Activated naive CD4-positive, alpha-beta T cell treated with anti-CD3 and anti-CD28 coated beads, Interleukin-2, amount 10 ng/mL, durations not matched to agents 7 days and 5 days (primary cell): ENCODE measurements at regions of chr20 and their contacts with region 1.

Region 1: DNA sequence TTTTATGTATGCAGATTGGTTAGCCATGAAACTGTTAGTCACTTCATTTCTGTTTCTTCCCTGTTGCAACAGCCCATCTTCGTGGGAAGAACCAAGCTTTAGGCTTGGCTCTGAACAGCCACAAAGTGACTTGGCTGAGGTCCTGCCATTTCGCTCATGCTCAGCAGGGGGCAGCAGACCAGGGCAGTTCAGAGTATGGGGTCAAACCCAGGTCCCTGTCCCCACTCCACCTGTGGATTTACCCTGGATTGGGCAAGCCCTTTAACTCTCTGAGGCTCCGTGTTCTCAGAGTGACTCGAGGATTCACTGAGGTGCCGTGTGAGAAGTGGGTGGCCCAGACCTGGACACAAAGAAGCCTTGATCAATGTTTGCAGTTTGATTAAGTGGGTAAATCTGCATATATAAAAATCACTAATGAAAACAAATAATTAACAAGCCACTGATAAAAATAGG is 19.8 kb upstream of the MAP1LC3A start:
- DNase-seq: peak; percentile 72
- H3K4me3 Mint-ChIP-seq: no peak overlapping the region
- H3K27ac Mint-ChIP-seq: peak overlapping the region; percentile 7
- H3K4me1 Mint-ChIP-seq: peaks cover 11% of the 10 kb centered on the region
- H3K27me3 Mint-ChIP-seq: no peaks in the 10 kb centered on the region

Region 2: GRCh38 chr20:34506480-34506879 is 32.2 kb before region 1 on chr20:
- CTCF ChIA-PET with region 1: no interaction called
- DNase-seq: no peak
- H3K4me3 Mint-ChIP-seq: no peak overlapping the region
- H3K27ac Mint-ChIP-seq: no peak overlapping the region
- H3K4me1 Mint-ChIP-seq: no peaks in the 10 kb centered on the region
- H3K27me3 Mint-ChIP-seq: no peaks in the 10 kb centered on the region

Region 3: DNA sequence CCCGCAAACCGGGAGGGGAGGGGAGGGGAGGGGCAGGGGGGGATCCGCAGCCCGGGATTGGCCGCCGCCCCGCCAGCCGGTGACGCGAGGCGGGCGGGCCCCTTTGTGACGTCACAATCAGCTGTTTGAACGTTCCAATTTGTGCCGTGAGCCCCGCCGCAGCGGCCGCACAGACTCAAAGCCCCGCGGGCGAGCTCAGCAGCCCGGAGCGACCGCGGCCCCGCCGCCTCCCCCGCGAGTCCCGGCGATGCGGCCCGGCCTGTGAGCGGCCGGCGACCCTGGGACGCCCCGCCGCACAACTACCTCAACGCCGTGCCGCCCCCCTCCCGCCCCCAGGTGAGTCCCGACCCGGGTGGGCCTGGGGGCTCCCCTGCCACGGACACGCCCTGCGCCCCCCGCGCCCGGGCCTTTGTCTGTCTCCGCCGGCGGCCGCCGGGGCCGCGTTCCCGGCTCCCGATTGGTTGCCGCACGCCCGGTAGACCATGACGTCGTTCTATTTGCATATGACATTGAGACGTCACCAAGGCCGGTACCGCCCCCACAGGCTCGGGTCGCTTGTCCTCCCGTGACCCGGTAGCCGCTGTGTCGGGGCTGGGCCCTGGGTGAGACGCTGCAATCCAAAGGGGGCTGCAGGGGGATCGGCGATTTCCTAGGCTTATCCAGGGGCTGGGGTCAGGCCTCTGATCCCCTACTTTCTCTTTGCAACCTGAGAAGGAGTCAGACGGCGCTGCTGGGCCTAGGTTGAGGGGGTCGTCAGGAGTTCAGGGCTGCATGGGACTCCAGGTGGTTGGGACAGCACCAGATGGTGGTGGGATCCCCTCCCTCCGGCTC is 165.7 kb after region 1 on chr20 and contains the start of gene TP53INP2:
- CTCF ChIA-PET with region 1: interaction called, 63 read pairs
- DNase-seq: peak; percentile 95
- H3K4me3 Mint-ChIP-seq: peak within 1 kb of the TSS; percentile 97
- H3K27ac Mint-ChIP-seq: peak within 1 kb of the TSS; percentile 90
- H3K4me1 Mint-ChIP-seq: peaks cover 46% of the 10 kb centered on the region
- H3K27me3 Mint-ChIP-seq: peaks cover 47% of the 10 kb centered on the region

Region 4: DNA sequence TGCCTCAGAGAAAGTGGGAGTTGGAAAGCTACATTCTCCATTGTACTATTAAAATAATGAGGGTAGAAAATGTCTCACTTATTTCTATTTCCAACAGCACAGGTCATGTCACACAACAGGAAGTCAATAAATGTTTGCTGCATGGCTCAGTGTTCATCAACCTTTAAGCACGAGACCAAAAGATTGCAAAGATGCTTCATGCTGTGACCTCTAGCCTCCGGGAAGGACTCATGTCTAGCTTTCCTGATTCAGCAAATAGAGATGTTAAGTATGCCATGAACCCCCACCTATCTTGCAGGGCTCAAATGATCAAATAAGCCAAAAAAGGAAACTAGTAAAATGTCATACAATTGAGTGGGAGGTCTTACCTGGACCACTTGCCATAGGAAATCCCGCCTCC is 229.4 kb after region 1 on chr20:
- CTCF ChIA-PET with region 1: interaction called, 12 read pairs
- DNase-seq: no peak
- H3K4me3 Mint-ChIP-seq: no peak overlapping the region
- H3K27ac Mint-ChIP-seq: no peak overlapping the region
- H3K4me1 Mint-ChIP-seq: no peaks in the 10 kb centered on the region
- H3K27me3 Mint-ChIP-seq: no peaks in the 10 kb centered on the region